ENCODE measurements at regions of chrX and their contacts with region 1.

Region 1: DNA sequence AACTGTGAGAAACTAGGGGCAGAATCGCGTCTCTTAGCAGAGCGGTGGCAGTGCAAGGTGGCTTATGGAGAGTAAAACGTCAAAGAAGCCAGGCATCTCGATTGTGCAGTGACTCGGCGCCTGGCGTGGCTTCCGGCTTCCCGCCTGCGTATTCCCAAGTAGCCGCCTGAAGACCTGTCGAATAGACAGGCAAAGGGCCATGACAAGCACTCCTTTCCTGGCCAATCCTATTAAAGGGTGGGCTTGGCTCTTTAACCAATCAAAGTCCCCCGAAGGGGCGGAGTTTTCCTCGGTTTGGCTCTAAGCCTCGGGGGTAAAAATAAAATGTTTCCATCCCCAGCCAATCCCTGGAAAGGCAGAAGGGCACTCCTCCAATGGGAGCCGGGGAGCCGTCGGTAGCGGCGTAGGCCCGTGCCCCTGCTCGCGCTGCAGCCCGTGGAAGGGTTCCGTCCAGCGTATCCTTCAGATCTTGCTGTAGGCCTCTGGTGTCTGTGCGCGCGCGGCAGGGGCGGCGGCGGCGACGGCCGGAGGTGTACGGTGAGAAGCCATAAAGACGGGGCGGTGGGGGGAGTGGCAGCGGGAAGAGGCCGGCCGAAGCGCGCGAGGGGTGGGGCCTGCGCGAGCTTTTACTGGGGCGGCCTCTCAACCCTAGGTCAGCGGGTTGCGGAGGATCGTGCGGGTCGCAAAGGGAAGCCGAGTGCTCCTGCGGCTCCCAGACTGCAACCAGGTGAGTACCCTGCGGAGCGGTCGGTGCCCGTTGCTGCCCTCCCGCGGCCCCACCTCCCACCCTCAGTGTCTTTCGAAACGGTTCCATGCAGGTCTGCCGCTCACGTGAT is at the start of gene KANTR:
- DNase-seq: peak; percentile 95
- H3K4me3 ChIP-seq: peak within 1 kb of the TSS; percentile 2 to 72 (median 70)
- H3K27ac ChIP-seq: peak within 1 kb of the TSS; percentile 83
- H3K4me1 ChIP-seq: peaks cover 12% of the 10 kb centered on the region
- H3K27me3 ChIP-seq: no peaks in the 10 kb centered on the region
- CTCF ChIP-seq: peak in 1 of 2 donors; percentile 9
- POLR2A ChIP-seq: peak; percentile 41
- total RNA-seq, gene KANTR: 8.6 and 9.8 TPM in 2 replicates

Region 2: DNA sequence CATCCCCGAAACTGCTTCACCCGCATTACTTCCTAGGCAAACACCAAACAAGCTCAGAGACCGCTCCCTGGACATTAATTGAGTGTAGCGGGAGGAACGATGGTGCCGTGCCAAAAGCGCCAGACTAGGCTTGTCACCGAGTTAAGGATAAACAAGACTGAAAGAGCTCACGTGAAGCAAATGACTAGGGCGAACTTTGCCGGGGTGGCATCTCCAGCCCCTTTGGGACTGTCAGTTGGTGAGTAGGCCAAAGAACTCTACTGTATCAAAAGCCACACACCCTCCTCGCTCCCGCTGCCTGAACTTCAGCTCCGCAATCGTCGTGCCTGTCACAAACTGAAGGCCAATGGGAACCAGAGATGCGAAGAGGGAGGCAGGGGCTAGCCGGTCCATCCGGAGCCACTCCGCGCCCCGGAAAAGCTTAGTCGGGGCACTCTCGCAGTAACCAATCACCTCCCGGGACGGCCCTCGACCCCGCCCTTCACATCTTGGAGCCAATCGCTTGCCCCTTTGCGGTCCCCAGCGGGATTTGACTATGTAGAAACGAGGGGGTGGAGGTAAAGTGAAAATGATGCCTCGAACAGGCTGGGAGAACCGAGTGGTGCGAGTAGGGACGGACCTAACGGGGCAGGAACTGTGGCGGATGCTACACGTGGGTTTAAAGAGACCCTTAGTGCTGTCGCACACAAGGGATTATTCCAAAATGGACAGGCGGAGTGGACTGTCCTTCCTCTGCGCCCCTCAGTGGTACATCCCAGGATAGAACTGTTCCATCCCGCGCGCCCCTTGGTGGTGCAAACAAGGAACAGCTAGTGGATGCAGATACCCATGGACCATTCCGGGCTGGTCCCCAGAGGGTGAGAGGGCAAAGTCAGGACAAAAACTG is 98.6 kb before region 1 on chrX:
- CTCF ChIA-PET with region 1: no interaction called
- POLR2A ChIA-PET with region 1: no interaction called
- dilution Hi-C with region 1: no loop called
- intact Hi-C with region 1: loop called (anchors 2 kb)
- DNase-seq: peak; percentile 95
- H3K4me3 ChIP-seq: peak overlapping the region; percentile 55 to 89 (median 67)
- H3K27ac ChIP-seq: peak overlapping the region; percentile 58
- H3K4me1 ChIP-seq: peaks cover 6% of the 10 kb centered on the region
- H3K27me3 ChIP-seq: no peaks in the 10 kb centered on the region
- CTCF ChIP-seq: peak; percentile 37 to 66
- POLR2A ChIP-seq: no peak

Region 3: DNA sequence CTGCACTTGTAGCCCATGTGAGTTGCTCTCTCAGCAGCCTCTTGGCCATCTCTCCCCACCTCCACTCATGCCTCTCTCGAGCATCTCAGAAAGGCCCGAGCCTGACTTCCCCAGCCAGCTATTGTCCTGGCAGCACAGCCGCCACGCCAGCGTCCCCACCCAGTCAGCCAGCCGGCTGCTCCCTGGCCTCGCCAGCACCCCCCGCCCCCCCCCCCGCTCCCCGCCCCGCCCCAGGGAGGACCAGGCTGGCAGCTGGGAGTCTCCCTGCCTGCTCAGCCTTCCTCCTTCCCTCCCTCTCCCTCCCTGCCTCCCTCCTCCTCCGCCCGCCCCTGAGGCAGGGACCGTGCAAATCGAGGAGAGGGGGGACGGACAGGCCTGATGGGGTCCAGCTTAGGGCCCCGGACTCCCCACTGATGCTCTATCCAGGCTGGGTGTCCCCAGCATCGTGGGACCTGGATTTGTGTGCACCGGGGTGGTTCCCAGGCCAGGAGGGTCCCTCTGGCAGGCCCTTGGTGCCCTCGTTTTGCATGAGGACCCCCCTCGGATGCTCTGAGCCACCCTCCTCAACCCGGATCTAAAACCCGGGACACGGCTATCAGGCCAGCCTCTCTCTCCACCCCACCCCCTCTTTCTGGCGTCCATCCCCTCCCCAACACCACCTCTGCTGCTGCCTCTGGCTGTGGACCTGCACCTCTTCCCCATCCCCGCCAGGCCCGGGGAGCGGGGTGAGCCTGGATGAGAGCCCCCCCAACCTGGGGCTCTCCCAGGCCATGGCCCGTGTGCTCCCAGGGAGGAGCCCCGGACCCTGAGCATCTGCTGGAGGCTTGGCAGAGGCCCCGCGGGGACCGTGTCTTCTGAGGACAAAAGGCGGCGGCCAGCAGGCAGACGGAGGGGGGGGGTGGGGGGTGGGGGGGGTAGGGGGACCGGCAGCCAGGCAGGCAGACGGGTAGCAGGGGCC is 45.5 kb before region 1 on chrX and contains the start of gene GPR173:
- CTCF ChIA-PET with region 1: no interaction called
- POLR2A ChIA-PET with region 1: no interaction called
- dilution Hi-C with region 1: no loop called
- intact Hi-C with region 1: loop called (anchors 1 kb)
- DNase-seq: peak; percentile 63
- H3K4me3 ChIP-seq: peak within 1 kb of the TSS; percentile 70 to 79 (median 70)
- H3K27ac ChIP-seq: peak within 1 kb of the TSS; percentile 65
- H3K4me1 ChIP-seq: peaks cover 17% of the 10 kb centered on the region
- H3K27me3 ChIP-seq: no peaks in the 10 kb centered on the region
- CTCF ChIP-seq: no peak
- POLR2A ChIP-seq: no peak
- total RNA-seq, gene GPR173: 8.3 and 11.3 TPM in 2 replicates

Region 4: GRCh38 chrX:53071604-53072417 is 22.2 kb before region 1 on chrX:
- CTCF ChIA-PET with region 1: interaction called, 5 read pairs
- POLR2A ChIA-PET with region 1: no interaction called
- dilution Hi-C with region 1: no loop called
- intact Hi-C with region 1: loop called (anchors 1 kb)
- DNase-seq: peak; percentile 49
- H3K4me3 ChIP-seq: no peak overlapping the region
- H3K27ac ChIP-seq: no peak overlapping the region
- H3K4me1 ChIP-seq: no peaks in the 10 kb centered on the region
- H3K27me3 ChIP-seq: no peaks in the 10 kb centered on the region
- CTCF ChIP-seq: peak; percentile 42 to 44
- POLR2A ChIP-seq: no peak

Region 5: GRCh38 chrX:53081925-53082772 is 11.8 kb before region 1 on chrX and contains the start of gene TSPYL2:
- CTCF ChIA-PET with region 1: no interaction called
- POLR2A ChIA-PET with region 1: no interaction called
- dilution Hi-C with region 1: no loop called
- intact Hi-C with region 1: loop called (anchors 1 kb)
- DNase-seq: peak; percentile 98
- H3K4me3 ChIP-seq: peak within 1 kb of the TSS; percentile 44 to 59 (median 46)
- H3K27ac ChIP-seq: peak within 1 kb of the TSS; percentile 40
- H3K4me1 ChIP-seq: peaks cover 5% of the 10 kb centered on the region
- H3K27me3 ChIP-seq: no peaks in the 10 kb centered on the region
- CTCF ChIP-seq: no peak
- POLR2A ChIP-seq: peak; percentile 96
- total RNA-seq, gene TSPYL2: 15.9 and 17.3 TPM in 2 replicates

Region 6: DNA sequence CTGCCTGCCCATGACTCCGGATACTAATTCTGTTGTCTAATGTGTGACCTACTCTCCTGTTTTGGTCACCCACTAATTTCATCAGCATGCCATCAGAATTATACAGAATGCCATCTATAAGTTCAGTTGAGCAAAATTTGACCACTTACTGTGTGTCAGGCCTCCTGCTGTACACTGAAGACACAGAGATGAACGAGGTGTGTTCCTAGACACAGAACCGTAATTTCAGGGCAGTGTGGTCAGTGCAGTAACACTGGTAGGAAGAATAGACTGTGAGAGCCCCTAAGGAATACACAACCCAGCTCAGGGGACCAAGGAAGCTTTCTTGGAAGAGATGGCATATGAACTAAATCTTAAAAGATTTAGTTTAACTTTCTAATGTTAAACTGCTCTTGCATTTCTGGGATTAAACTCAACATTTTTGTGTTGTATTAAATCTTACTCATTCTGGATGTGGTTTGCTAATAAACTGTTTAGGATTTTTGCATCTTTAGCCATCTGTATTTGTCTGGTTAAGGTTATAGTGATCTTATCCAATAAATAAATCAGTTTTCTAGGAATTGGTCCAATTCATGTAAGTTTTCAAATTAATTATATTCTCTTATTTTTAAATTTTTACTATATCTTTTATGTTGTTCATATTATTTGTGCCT is 34.3 kb after region 1 on chrX:
- CTCF ChIA-PET with region 1: no interaction called
- POLR2A ChIA-PET with region 1: no interaction called
- dilution Hi-C with region 1: no loop called
- intact Hi-C with region 1: no loop called
- DNase-seq: no peak
- H3K4me3 ChIP-seq: no peak overlapping the region
- H3K27ac ChIP-seq: no peak overlapping the region
- H3K4me1 ChIP-seq: no peaks in the 10 kb centered on the region
- H3K27me3 ChIP-seq: no peaks in the 10 kb centered on the region
- CTCF ChIP-seq: no peak
- POLR2A ChIP-seq: no peak

Region 7: GRCh38 chrX:53224860-53225797 is 131.2 kb after region 1 on chrX and contains the start of gene KDM5C:
- CTCF ChIA-PET with region 1: no interaction called
- POLR2A ChIA-PET with region 1: no interaction called
- dilution Hi-C with region 1: no loop called
- intact Hi-C with region 1: no loop called
- DNase-seq: peak; percentile 85
- H3K4me3 ChIP-seq: peak within 1 kb of the TSS; percentile 70 to 88 (median 71)
- H3K27ac ChIP-seq: peak within 1 kb of the TSS; percentile 91
- H3K4me1 ChIP-seq: peaks cover 14% of the 10 kb centered on the region
- H3K27me3 ChIP-seq: no peaks in the 10 kb centered on the region
- CTCF ChIP-seq: no peak
- POLR2A ChIP-seq: peak; percentile 61
- total RNA-seq, gene KDM5C: 77.8 and 78.7 TPM in 2 replicates

Region 8: DNA sequence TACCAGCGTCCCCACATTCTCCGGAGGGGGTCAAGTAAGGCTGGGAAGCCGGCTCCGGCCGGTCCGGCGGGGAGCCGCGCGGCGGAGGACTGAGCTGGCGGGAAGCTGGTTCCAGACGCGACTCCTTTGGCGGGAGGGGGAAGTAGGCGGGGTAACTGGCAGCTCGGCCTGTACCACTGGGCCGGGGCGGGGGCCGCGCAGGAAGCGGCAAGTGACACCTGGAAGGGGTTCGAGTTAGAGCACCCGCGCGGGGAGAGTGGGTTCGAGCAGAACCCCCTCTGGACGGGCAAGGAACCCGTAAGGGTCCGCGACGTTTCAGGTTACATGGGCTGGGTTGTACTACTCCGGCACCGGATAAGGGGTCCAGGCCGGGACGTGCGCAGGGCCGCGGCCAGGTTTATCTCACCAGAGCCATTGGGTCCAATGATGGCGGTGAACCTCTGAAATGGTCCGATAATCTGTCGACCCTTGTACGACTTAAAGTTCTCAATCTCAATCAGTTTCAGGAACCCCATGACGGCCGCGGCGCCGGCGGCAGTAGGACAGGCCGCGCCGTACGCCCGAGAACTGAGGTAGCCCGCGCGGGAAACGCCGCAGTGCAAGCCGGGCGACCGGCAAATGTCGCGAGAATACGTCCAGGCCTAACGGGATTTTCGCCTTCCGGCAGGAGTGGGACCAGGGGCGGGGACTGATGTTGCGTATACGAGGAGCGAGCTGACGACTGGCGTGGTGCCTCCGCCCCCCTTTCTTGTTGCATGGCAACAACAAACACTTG is 328.3 kb after region 1 on chrX and contains the start of gene SMC1A:
- CTCF ChIA-PET with region 1: no interaction called
- POLR2A ChIA-PET with region 1: no interaction called
- dilution Hi-C with region 1: no loop called
- intact Hi-C with region 1: loop called (anchors 10 kb)
- DNase-seq: peak; percentile 96
- H3K4me3 ChIP-seq: peak within 1 kb of the TSS; percentile 66 to 81 (median 80)
- H3K27ac ChIP-seq: peak within 1 kb of the TSS; percentile 88
- H3K4me1 ChIP-seq: peaks cover 12% of the 10 kb centered on the region
- H3K27me3 ChIP-seq: no peaks in the 10 kb centered on the region
- CTCF ChIP-seq: no peak
- POLR2A ChIP-seq: peak; percentile 83
- total RNA-seq, gene SMC1A: 72.5 and 75.9 TPM in 2 replicates

Measured in endothelial cell of umbilical vein (primary cell).